ENCODE measurements at regions of chr7 and their contacts with region 1.

Region 1: GRCh38 chr7:92809397-92810241 is 26.8 kb downstream of the CDK6 start:
- DNase-seq: peak; percentile 72
- H3K4me3 Mint-ChIP-seq: peak overlapping the region; percentile 66
- H3K27ac Mint-ChIP-seq: peak overlapping the region; percentile 93
- H3K4me1 Mint-ChIP-seq: peaks cover 93% of the 10 kb centered on the region
- H3K27me3 Mint-ChIP-seq: no peaks in the 10 kb centered on the region

Region 2: DNA sequence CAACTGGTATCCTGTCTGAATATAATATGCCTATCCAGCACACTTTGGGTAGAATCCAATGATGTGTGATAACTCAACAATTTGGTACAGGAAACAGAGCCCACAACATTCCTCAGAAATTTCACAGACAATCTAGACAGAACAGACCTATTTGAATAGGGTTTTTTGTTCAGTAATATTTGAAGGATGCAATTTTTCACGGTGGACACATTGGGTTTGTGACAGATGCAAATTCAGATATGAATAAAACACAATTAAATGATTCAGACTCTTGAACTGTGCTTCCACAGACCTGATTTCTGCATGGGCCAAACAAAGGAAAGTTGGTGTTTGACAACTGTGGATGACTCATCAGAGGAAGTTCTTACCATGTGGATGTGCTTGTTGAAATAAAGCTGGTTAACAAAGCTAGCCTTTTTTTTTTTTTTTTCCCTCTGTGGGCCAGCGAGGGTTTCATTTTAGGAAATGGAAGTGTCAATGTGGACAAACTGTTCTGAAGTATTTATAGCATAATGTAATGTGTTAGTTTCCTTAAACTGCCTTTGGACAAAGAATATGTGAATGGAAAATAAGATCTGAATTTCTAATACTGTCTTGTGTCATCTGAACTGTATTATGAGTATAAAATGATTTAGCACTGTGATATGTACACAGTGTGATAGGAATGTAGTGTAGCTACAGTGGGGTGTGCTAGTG is 176.3 kb before region 1 on chr7:
- intact Hi-C with region 1: loop called (anchors 1 kb)
- DNase-seq: peak; percentile 48
- H3K4me3 Mint-ChIP-seq: peak overlapping the region; percentile 64
- H3K27ac Mint-ChIP-seq: peak overlapping the region; percentile 94
- H3K4me1 Mint-ChIP-seq: peaks cover 80% of the 10 kb centered on the region
- H3K27me3 Mint-ChIP-seq: no peaks in the 10 kb centered on the region

Region 3: GRCh38 chr7:92708111-92709042 is 101.2 kb before region 1 on chr7:
- intact Hi-C with region 1: loop called (anchors 1 kb)
- DNase-seq: no peak
- H3K4me3 Mint-ChIP-seq: no peak overlapping the region
- H3K27ac Mint-ChIP-seq: peak overlapping the region; percentile 84
- H3K4me1 Mint-ChIP-seq: peaks cover 59% of the 10 kb centered on the region
- H3K27me3 Mint-ChIP-seq: no peaks in the 10 kb centered on the region

Region 4: DNA sequence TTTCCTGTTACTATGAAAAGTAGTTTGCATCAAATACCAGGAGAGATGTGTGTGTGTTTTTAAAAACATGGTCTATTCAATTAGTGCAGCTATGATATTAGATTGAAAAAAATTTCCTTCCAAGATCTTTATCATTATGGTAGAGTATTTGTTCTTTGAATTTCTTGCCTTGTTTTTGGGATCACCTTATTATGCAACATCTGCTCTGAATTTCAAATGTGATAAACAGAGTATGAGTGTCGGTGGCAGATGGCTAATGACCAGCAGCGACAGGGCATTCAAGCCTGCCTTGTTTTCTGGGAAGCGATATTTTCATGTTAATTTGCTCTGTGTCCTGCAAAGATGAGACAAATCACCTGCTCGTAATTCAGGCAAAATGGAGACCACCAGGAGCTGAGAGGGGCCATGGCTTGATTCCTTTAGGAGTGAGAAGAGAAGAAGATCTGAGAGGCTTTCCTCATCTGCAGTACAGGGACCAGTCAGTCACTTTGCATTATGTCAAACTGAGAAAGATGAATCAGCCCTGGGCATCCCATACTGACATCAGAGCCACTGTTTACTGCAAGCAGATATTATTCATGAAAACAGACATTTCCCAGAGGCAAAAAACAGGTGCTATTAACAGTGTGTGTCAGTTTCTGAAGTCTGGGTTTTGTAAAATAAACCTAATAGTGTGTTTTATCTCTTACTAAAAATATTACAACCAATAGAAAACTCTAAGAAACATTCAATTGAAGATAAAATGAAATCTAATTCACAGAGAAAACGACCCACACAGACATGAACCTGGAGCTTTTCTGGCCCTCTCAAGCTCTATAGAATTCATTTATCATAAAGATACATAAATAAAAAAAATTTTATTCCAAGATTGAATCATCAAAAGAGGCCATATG is 40.9 kb before region 1 on chr7:
- intact Hi-C with region 1: loop called (anchors 1 kb)
- DNase-seq: peak; percentile 20
- H3K4me3 Mint-ChIP-seq: peak overlapping the region; percentile 47
- H3K27ac Mint-ChIP-seq: peak overlapping the region; percentile 85
- H3K4me1 Mint-ChIP-seq: peaks cover 83% of the 10 kb centered on the region
- H3K27me3 Mint-ChIP-seq: no peaks in the 10 kb centered on the region

Region 5: DNA sequence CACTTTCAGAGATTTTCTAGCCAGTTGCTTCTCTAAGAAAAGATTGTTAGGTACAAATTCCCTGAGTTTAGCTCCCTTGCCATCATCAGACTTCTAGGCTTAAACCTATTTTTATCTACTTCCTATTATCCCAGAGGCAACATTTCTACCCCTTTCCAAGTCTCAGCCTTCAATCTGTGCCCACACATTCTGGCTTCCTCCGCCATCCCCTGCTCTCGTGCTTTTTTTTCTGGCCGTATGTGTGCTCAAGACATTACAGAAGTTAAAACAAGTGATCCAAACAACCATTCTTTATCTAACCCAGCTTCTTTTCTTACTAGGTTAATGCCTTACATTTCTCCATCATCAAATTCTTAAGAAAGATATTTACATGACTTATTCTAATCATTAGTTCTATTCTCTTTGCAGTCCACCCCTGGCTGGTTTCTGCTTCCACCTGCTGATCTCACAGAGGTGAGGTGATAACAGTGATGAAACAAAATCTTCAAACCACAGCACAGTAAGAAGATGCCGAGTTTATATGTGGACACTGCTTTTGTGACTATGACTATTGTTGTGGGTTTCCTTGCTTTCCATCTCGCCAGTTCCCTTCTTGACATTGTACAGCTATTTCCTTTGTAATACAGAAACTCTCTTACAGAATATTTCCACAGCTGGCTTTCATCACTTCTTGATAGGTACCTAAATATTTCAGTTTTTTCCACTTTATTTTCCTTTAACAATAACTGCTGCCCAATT is 45.1 kb after region 1 on chr7:
- intact Hi-C with region 1: loop called (anchors 1 kb)
- DNase-seq: no peak
- H3K4me3 Mint-ChIP-seq: peak overlapping the region; percentile 4
- H3K27ac Mint-ChIP-seq: peak overlapping the region; percentile 89
- H3K4me1 Mint-ChIP-seq: peaks cover 17% of the 10 kb centered on the region
- H3K27me3 Mint-ChIP-seq: no peaks in the 10 kb centered on the region

Measured in activated T-helper 1 cell treated with anti-CD3 and anti-CD28 coated beads, Interleukin-12 subunit alpha, Interleukin-12 subunit beta, Interleukin-2, Interleukin-4 antibody, amounts not matched to agents 30 ng/mL and 10 ng/mL and 1 ng/mL, durations not matched to agents 14 hours and 24 hours and 36 hours (primary cell).